Dorsolateral prefrontal cortex (tissue), 120 donors: ENCODE measurements at regions of chr10 and their contacts with region 1.

Region 1: GRCh38 chr10:101012525-101013364 is 13.1 kb downstream of the LZTS2 start:
- DNase-seq: peak; percentile 82 to 99 (median 96)
- H3K4me3 ChIP-seq: peak overlapping the region in 10 of 59 donors; percentile 1 to 29 (median 13)
- H3K27ac ChIP-seq: peak overlapping the region in 58 of 59 donors; percentile 55 to 100 (median 93)
- H3K27me3 ChIP-seq: no peaks in the 10 kb centered on the region
- CTCF ChIP-seq: peak; percentile 86 to 99 (median 95)

Region 2: DNA sequence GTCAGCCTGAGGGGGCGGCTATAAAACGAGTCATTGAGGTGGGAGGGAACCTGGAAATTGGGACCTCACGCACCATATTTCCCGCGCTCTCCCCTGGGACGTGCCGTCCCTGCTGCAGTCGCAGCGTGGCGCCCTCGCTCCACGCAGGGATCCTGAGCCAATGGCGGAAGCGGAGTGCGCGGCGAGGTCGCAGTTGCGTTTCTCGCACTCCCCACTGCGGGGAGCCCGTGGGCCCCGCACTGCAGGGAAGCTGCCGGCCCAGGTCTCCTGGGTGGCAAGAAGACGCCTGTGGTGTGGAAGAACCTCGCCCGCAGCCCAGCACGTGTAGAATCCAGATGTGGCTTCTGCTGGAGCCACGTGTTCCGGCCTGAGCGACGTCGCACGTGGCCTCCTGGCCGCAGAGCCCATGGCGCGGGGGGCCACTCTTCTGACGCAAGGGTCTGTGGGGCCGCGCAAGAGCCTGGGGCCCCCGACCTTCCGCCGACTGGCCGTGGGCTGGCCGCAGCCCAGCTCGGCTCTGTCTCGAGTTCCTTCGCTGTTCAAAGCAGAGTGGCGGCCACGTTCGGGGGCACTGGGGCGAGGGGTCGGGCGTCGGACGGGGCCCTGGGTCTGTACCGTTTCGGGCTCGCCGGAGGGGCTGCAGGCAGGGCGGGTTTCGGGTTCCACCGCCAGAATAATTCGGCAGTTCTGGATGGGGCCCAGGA is 450.6 kb before region 1 on chr10:
- intact Hi-C with region 1: loop called in 1 of 2 experiments (anchors 10 kb)
- DNase-seq: peak; percentile 22 to 78 (median 62)
- H3K4me3 ChIP-seq: peak overlapping the region in 55 of 59 donors; percentile 5 to 59 (median 41)
- H3K27ac ChIP-seq: no peak overlapping the region
- H3K27me3 ChIP-seq: peaks cover 0 to 47% (median 13%) of the 10 kb centered on the region in 45 donors
- CTCF ChIP-seq: peak; percentile 20 to 93 (median 82)

Region 3: DNA sequence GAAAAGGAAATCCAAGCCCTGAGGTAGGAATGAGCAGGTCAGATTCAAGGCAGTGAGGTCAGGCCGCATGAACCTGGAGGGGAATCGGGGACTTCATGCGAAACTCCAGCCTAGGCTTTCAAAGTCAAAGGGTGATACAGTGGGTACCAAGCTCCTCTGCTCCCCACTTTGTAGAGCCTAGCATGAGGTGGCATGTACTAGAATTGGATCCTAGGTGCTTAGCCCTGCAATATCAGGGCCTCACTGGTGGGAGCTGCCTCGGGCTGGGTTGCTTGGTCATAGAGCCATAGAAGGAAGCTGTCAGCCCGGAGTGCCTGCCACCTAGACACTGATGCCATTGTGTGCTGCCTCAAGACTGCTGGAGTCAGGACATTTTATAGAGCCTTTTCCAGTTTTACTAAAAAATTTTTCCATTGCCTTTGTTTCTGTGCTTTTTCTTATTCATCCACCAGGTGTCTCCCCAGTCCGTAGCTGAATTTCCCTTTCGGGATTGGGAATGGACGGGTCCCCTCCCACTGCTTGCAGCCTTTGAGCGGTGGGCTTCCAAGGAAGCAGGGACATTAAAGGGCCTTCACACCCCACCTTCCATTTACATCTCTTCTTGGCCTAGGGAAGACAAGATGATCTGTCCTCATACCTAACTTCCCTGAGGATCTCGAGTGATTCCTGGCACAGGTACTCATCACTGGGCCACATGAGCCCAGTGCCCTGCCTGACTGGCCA is 18.6 kb before region 1 on chr10:
- intact Hi-C with region 1: loop called (anchors 1 kb)
- DNase-seq: peak in 1 of 10 donors; percentile 46
- H3K4me3 ChIP-seq: no peak overlapping the region
- H3K27ac ChIP-seq: peak overlapping the region; percentile 43 to 100 (median 94)
- H3K27me3 ChIP-seq: no peaks in the 10 kb centered on the region
- CTCF ChIP-seq: peak; percentile 62 to 96 (median 85)

Region 4: GRCh38 chr10:100998991-100999741 is 13.6 kb before region 1 on chr10:
- intact Hi-C with region 1: loop called (anchors 1 kb)
- DNase-seq: peak; percentile 62 to 89 (median 81)
- H3K4me3 ChIP-seq: peak overlapping the region; percentile 52 to 94 (median 85)
- H3K27ac ChIP-seq: peak overlapping the region; percentile 96 to 100 (median 100)
- H3K27me3 ChIP-seq: no peaks in the 10 kb centered on the region
- CTCF ChIP-seq: peak; percentile 79 to 99 (median 94)

Region 5: DNA sequence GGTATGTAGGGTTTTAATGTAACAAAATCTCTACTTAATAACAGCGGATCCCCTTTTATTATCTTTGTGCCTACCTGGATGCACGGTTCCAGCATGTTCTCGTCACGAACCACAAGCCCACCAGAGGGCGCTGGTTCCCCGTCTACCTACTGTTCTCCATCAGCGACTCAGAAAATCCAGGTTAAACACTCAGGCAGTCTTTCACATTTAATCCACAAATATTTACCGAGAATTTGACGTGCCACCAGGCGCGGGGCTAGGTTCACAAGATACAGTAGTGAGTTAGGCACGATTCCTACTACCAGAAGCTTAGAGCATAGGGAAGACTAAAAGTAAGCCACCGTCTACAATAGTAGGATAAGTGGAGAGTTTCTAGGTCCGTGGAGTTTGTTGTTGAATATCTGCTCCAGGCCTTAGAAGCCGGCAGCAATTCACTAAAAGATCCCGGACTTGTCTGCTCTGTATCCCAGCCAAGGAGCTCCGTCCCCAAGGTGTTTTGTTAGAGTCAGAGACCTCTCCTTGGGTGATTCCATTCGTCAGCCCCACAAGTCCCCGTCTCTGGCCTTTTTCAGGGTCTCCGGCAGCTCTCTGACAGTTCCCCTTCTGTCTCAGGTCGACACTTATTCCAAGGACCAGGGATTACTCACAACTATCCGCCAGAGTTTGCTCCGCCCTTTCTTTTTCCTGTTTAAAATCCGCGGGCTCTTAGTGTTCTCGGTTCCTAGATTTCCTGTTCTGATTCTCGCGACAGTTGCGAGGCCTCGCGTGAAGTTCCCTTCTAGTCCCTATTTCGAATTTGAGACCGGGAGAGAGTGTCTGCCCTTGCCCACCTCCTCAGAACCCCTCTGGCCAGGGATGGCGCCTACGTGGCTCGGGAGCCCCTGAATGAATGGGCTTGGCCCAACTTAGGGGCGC is 47.5 kb after region 1 on chr10:
- intact Hi-C with region 1: loop called in 1 of 2 experiments (anchors 10 kb)
- DNase-seq: peak; percentile 73 to 92 (median 84)
- H3K4me3 ChIP-seq: peak overlapping the region; percentile 59 to 100 (median 83)
- H3K27ac ChIP-seq: peak overlapping the region; percentile 52 to 99 (median 94)
- H3K27me3 ChIP-seq: peaks cover 0 to 36% (median 20%) of the 10 kb centered on the region in 45 donors
- CTCF ChIP-seq: peak; percentile 68 to 92 (median 86)